Heart left ventricle (tissue), 16 donors: ENCODE measurements at regions of chr15 and their contacts with region 1.

Region 1: GRCh38 chr15:50576166-50576565 is 29.7 kb upstream of the USP50 start:
- DNase-seq: no peak
- ATAC-seq: no peak
- H3K4me3 ChIP-seq: no peak overlapping the region
- H3K27ac ChIP-seq: no peak overlapping the region
- H3K4me1 ChIP-seq: peaks cover 0 to 4% (median 0%) of the 10 kb centered on the region in 12 donors
- H3K27me3 ChIP-seq: no peaks in the 10 kb centered on the region
- CTCF ChIP-seq: no peak
- POLR2A ChIP-seq: no peak

Region 2: DNA sequence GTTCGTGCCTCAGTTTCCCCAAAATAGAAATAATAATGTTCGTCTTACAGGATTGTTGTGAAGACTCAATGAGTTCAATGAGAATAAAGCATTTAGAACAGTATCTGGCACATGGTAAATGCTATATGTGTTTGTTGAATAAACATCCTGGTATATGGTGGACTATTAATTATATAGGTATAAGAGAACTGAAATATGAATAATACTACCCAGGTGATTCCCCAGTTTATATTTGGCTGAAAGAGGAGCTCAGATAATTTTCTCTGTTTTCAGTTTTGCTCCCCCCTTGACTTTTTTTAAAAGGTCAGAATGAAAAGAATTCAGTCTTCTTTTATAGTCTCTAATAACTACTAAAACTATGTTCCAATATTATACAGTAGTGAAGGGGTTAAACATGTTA is 105.1 kb before region 1 on chr15:
- intact Hi-C with region 1: no loop called
- DNase-seq: no peak
- ATAC-seq: no peak
- H3K4me3 ChIP-seq: no peak overlapping the region
- H3K27ac ChIP-seq: no peak overlapping the region
- H3K4me1 ChIP-seq: no peaks in the 10 kb centered on the region
- H3K27me3 ChIP-seq: no peaks in the 10 kb centered on the region
- CTCF ChIP-seq: no peak
- POLR2A ChIP-seq: no peak

Region 3: GRCh38 chr15:50496692-50497091 is 79.5 kb before region 1 on chr15:
- intact Hi-C with region 1: loop called in 3 of 10 experiments (anchors 10 kb)
- DNase-seq: no peak
- ATAC-seq: no peak
- H3K4me3 ChIP-seq: no peak overlapping the region
- H3K27ac ChIP-seq: no peak overlapping the region
- H3K4me1 ChIP-seq: peaks cover 0 to 4% (median 0%) of the 10 kb centered on the region in 12 donors
- H3K27me3 ChIP-seq: no peaks in the 10 kb centered on the region
- CTCF ChIP-seq: no peak
- POLR2A ChIP-seq: no peak

Region 4: GRCh38 chr15:50590288-50590687 is 14.1 kb after region 1 on chr15:
- intact Hi-C with region 1: loop called in 1 of 10 experiments (anchors 2 kb)
- DNase-seq: no peak
- ATAC-seq: no peak
- H3K4me3 ChIP-seq: no peak overlapping the region
- H3K27ac ChIP-seq: no peak overlapping the region
- H3K4me1 ChIP-seq: no peaks in the 10 kb centered on the region
- H3K27me3 ChIP-seq: no peaks in the 10 kb centered on the region
- CTCF ChIP-seq: no peak
- POLR2A ChIP-seq: no peak

Region 5: DNA sequence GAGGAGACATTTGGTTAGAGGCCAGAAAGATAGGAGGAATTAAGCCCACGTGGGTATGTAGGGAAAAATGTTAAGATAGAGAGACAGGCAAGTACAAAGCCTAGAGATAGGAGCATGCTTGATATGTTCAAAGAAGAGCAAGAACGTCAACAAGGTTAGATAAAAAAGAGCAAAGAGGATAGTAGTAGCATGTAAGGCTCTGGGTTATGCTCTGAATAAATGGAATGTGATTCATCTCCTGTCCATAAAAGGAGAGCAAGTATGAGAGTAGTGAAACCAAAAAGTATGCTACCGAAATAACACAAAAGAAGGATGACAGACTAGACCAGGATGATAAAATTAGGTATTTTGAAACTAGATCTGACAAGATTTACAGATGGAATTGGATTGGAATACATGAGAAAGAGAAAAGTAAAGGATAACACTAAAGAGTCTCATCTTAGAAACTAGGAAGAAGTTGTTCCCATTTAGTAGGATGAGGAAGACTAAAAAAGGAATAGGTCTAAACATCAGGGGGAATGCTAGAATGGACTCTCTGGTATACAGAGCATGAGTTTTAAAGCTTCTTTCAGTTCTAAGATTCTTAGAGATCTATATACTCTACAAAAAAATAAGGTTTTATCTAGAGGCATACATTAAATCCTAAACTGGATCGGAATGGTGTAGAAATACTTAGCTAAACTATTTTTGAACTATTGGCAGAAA is 51.3 kb after region 1 on chr15:
- intact Hi-C with region 1: loop called in 2 of 10 experiments (anchors 10 kb)
- DNase-seq: no peak
- ATAC-seq: peak in 2 of 4 donors; percentile 41 to 42
- H3K4me3 ChIP-seq: no peak overlapping the region
- H3K27ac ChIP-seq: peak overlapping the region in 2 of 12 donors; percentile 12 to 33
- H3K4me1 ChIP-seq: peaks cover 0 to 13% (median 4%) of the 10 kb centered on the region in 12 donors
- H3K27me3 ChIP-seq: no peaks in the 10 kb centered on the region
- CTCF ChIP-seq: no peak
- POLR2A ChIP-seq: no peak

Region 6: DNA sequence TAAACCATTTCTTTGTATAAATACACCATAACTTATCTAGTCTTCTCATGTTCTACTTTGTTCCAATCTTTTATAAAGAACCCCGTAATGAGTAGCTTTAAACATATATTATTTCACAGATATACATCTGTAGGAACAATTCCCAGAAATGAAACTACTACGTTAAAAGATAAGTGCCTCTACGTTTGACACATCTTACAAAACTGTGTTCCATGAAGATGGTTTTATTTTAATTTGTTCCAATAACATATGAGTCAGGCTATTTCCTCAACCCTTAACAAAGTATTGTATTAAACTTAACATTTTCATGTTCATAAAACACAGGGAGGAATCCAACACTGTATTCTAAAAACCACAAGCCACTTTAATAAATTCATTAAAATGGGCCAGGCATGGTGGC is 57.5 kb after region 1 on chr15:
- intact Hi-C with region 1: loop called in 2 of 10 experiments (anchors 10 kb)
- DNase-seq: no peak
- ATAC-seq: no peak
- H3K4me3 ChIP-seq: no peak overlapping the region
- H3K27ac ChIP-seq: no peak overlapping the region
- H3K4me1 ChIP-seq: peaks cover 0 to under 1% (median 0%) of the 10 kb centered on the region in 12 donors
- H3K27me3 ChIP-seq: no peaks in the 10 kb centered on the region
- CTCF ChIP-seq: no peak
- POLR2A ChIP-seq: no peak

Region 7: GRCh38 chr15:50653156-50653745 is 77.1 kb after region 1 on chr15:
- intact Hi-C with region 1: loop called in 1 of 10 experiments (anchors 5 kb)
- DNase-seq: no peak
- ATAC-seq: no peak
- H3K4me3 ChIP-seq: no peak overlapping the region
- H3K27ac ChIP-seq: no peak overlapping the region
- H3K4me1 ChIP-seq: no peaks in the 10 kb centered on the region
- H3K27me3 ChIP-seq: no peaks in the 10 kb centered on the region
- CTCF ChIP-seq: no peak
- POLR2A ChIP-seq: no peak

Region 8: DNA sequence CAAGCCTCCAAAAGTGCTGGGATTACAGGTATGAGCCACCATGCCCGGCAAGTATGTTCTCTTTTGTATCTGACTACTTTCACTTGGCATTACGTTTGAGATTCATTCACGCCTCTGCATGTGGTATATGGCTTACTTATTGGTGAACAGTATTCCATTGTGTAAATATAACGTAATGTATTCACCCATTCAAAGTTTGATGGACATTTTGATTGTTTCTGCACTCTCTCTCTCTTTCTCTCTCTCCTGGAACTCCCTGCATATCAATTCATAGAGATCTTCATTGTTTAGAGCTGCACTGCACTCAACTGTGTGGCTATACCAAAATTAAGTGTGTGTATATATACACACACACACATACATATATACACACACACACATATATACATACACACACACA is 159.0 kb after region 1 on chr15:
- intact Hi-C with region 1: loop called in 1 of 10 experiments (anchors 10 kb)
- DNase-seq: no peak
- ATAC-seq: no peak
- H3K4me3 ChIP-seq: no peak overlapping the region
- H3K27ac ChIP-seq: no peak overlapping the region
- H3K4me1 ChIP-seq: no peaks in the 10 kb centered on the region
- H3K27me3 ChIP-seq: no peaks in the 10 kb centered on the region
- CTCF ChIP-seq: no peak
- POLR2A ChIP-seq: no peak